ENCODE measurements at regions of chr4 and their contacts with region 1.

Region 1: GRCh38 chr4:52712172-52712990 is 38.8 kb downstream of the ERVMER34-1 start:
- DNase-seq: peak; percentile 96 to 100 (median 99)

Region 2: DNA sequence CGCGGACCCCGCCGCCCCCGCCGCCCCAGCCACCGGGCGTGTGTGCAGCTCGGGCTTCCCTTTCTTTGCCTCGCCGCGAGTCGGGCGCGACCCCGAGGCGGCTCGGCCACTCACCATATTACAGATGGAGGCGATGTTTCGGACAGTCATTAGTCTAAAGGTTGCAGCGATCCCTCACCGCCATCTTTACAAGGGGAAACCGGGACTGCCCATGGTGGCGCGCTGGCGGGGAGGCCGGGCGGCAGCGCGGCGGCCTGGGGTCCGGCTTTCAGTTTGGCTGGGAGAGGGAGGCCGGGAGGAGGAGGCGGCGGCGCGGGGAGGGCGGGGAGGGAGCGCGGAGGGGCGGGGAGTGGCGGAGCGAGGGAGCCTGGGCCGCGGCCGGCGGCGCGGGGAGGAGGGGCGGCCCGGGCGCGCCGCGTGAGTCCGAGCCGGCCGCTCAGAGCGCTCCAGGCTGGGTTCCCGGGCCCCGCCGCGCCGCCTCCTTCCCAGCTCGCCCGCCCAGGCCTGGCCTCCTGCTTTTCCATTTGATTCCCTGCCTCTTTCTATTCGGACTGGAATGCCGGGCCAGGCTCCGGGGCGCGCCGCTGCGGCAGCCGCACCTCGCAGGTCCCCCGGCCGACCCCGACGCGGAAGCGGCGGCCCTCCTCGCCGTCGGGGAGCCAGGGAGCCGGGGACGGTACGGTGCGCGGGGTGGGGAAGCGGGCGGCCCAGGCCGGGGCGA is 53.2 kb before region 1 on chr4 and contains the start of gene USP46:
- intact Hi-C with region 1: loop called (anchors 5 kb)
- DNase-seq: peak; percentile 10 to 88 (median 74)

Region 3: GRCh38 chr4:52861879-52862616 is 149.7 kb after region 1 on chr4 and contains the start of gene RASL11B:
- intact Hi-C with region 1: loop called (anchors 10 kb)
- DNase-seq: peak; percentile 59 to 95 (median 89)

Region 4: DNA sequence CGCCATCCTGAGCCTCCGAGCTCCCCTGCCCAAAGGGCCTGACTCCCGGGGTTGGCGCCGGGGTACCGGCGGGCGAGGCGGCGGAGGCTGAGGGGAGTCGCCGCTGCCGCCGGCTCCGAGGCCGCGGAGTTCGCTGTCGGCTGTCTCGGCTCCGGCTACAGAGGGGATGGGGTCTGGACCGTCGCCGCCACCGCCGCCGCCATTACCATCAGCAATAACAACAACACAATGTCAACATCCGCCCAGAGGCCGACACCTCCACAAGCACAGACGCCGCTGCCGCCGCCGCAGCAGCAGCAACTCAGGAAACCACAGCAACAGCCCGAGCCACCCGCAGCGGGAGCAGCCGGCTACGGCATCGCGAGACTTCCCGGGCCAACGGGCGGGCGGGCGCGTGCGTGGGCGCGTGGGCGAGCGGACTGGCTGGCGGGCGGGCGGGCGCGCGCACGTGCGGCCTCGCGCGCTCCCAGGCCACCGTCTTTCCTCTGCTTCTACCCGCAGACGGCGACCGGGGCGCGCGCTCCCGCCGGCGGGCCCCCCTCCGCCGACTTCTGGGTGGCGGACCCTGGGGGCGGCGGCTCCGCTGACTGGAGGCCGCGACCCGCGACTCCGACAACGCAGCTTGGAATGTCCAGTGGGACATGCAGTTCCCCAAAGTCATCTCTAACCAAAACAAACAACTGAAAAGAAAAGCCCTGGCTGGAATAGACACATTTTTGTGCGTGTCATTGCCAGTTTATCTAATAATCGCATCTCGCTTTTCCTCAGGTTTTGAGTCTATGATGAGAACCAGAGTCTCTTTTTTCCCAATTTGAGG is 1352.1 kb after region 1 on chr4 and contains the start of gene CHIC2:
- intact Hi-C with region 1: loop called (anchors 10 kb)
- DNase-seq: peak; percentile 80 to 97 (median 92)